H1 (cell line): ENCODE measurements at regions of chr7 and their contacts with region 1.

Region 1: DNA sequence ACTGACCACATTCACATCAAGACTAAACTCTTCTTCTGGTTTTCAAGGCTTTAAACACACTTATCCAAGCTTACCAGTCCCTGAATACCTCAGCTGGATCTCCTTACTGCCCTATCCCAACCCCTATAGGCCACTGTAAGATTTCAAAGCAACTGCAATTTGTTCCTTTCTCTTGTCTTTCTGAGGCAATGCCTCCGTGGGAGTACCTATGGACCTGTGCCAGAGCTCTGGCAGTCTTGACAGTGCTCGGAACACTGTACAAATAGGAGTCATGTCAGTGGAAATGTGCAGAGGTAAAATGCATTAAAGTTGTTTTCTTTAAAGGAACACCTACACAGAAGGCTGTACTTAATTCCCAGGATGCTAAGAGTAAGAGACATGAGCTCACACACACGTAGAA is 124.7 kb downstream of the CNOT4 start:
- DNase-seq: no peak
- H3K4me3 ChIP-seq: no peak overlapping the region
- H3K27ac ChIP-seq: no peak overlapping the region
- H3K4me1 ChIP-seq: peaks cover 2 to 7% (median 5%) of the 10 kb centered on the region in 4 experiments; a peak in 6 of 7 replicates
- H3K27me3 ChIP-seq: no peaks in the 10 kb centered on the region
- CTCF ChIP-seq: no peak
- EP300 ChIP-seq: no peak
- POLR2A ChIP-seq: no peak
- RAD21 ChIP-seq: no peak

Region 2: DNA sequence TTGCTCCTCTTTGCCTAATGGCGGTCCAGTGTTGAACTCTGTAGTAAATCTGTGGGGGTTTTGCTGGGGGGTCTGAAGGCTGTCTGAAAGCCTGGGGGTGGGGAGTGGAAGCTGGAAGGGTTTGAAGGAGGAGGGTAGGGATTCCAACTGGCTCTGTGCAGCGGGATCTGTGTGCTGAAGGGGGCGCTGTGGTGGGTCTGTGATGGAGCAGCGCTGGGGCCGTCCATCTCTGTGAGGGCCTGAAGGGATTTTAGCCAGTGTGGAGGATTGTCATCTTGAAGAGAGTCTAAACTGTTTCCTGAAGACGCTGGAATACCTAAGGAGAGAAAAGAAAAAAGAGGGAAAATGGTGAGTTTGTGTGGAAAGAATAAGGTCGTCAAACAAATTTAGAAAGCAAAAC is 22.3 kb before region 1 on chr7:
- CTCF ChIA-PET with region 1: interaction called, 29 read pairs
- POLR2A ChIA-PET with region 1: interaction called, 3 read pairs
- DNase-seq: peak in 1 of 2 experiments; percentile 72
- H3K4me3 ChIP-seq: no peak overlapping the region
- H3K27ac ChIP-seq: no peak overlapping the region
- H3K4me1 ChIP-seq: no peaks in the 10 kb centered on the region
- H3K27me3 ChIP-seq: no peaks in the 10 kb centered on the region
- CTCF ChIP-seq: peak; percentile 60 to 78 (median 75)
- EP300 ChIP-seq: no peak
- POLR2A ChIP-seq: no peak
- RAD21 ChIP-seq: peak; percentile 26 to 44; a peak in 3 of 4 replicates